ENCODE measurements at regions of chr11 and their contacts with region 1.

Region 1: DNA sequence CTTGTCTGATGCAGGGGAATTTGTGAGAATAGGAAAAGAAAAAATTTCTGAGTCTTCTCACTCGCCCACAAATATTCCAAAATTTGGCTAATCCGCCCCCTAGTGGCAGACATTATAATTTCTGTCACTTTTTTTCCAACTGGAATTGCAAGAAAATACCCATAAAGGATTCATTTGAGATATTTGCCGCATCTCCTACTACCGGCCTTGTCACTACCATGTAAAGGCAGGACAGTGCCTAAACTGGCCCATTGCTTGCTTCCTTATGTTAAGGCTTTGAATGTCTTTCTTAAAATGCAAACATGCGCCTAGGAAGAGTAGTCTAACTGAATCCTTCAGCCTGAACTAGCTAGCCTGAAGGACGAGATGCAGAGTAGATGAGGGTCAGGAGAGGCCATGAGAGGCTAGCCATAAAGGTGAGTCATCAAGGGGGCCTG is 9.3 kb upstream of the CEP295 start:
- DNase-seq: no peak
- ATAC-seq: no peak
- H3K4me3 ChIP-seq: no peak overlapping the region
- H3K27ac ChIP-seq: no peak overlapping the region
- H3K4me1 ChIP-seq: no peaks in the 10 kb centered on the region
- H3K27me3 ChIP-seq: no peaks in the 10 kb centered on the region
- CTCF ChIP-seq: peak; percentile 41 to 77 (median 68)
- POLR2A ChIP-seq: no peak

Region 2: DNA sequence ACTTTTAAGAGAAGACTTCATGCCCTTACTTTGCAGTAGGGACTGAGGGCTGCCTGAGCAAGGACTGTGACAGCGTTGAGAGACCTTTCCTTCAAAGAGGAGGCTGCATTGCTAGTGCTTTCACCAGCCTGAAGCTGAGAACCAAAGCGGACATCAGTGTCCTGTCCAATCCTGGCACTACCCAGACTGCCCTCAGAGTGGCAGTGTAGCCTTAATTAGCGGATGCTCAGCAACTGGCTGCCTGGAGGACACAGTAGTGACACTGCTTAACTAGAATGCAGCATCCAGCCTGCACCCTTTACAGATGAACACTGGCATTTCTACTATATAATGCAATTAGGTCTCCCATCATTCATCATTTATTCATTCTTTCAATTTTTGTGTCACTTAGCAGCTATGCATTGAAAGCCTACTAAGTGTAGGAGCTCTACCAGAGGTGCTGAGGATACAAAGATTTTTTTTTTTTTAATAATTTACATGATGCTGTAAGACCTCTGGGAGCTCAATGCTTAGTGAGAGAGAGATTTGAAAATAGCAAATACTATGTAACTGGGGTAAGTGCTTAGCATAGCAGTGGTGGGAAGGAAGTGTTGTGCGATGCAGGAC is 417.5 kb before region 1 on chr11:
- in situ Hi-C with region 1: loop called (anchors 5 to 10 kb)
- intact Hi-C with region 1: loop called (anchors 1 kb)
- DNase-seq: peak; percentile 42 to 59
- ATAC-seq: peak; percentile 94 to 99
- H3K4me3 ChIP-seq: no peak overlapping the region
- H3K27ac ChIP-seq: no peak overlapping the region
- H3K4me1 ChIP-seq: no peaks in the 10 kb centered on the region
- H3K27me3 ChIP-seq: no peaks in the 10 kb centered on the region
- CTCF ChIP-seq: peak; percentile 71 to 95 (median 86)
- POLR2A ChIP-seq: no peak

Region 3: GRCh38 chr11:93487032-93487483 is 165.1 kb before region 1 on chr11:
- in situ Hi-C with region 1: no loop called
- intact Hi-C with region 1: loop called (anchors 10 kb)
- DNase-seq: no peak
- ATAC-seq: no peak
- H3K4me3 ChIP-seq: no peak overlapping the region
- H3K27ac ChIP-seq: no peak overlapping the region
- H3K4me1 ChIP-seq: no peaks in the 10 kb centered on the region
- H3K27me3 ChIP-seq: no peaks in the 10 kb centered on the region
- CTCF ChIP-seq: no peak
- POLR2A ChIP-seq: no peak

Region 4: GRCh38 chr11:93767018-93767417 is 114.8 kb after region 1 on chr11:
- in situ Hi-C with region 1: no loop called
- intact Hi-C with region 1: no loop called
- DNase-seq: no peak
- ATAC-seq: no peak
- H3K4me3 ChIP-seq: no peak overlapping the region
- H3K27ac ChIP-seq: no peak overlapping the region
- H3K4me1 ChIP-seq: no peaks in the 10 kb centered on the region
- H3K27me3 ChIP-seq: no peaks in the 10 kb centered on the region
- CTCF ChIP-seq: no peak
- POLR2A ChIP-seq: no peak

Region 5: GRCh38 chr11:94100253-94100652 is 448.1 kb after region 1 on chr11:
- in situ Hi-C with region 1: no loop called
- intact Hi-C with region 1: no loop called
- DNase-seq: no peak
- ATAC-seq: no peak
- H3K4me3 ChIP-seq: no peak overlapping the region
- H3K27ac ChIP-seq: no peak overlapping the region
- H3K4me1 ChIP-seq: no peaks in the 10 kb centered on the region
- H3K27me3 ChIP-seq: no peaks in the 10 kb centered on the region
- CTCF ChIP-seq: no peak
- POLR2A ChIP-seq: no peak

Region 6: GRCh38 chr11:94433049-94433448 is 780.9 kb after region 1 on chr11:
- in situ Hi-C with region 1: no loop called
- intact Hi-C with region 1: no loop called
- DNase-seq: no peak
- ATAC-seq: no peak
- H3K4me3 ChIP-seq: no peak overlapping the region
- H3K27ac ChIP-seq: no peak overlapping the region
- H3K4me1 ChIP-seq: no peaks in the 10 kb centered on the region
- H3K27me3 ChIP-seq: no peaks in the 10 kb centered on the region
- CTCF ChIP-seq: no peak
- POLR2A ChIP-seq: no peak

Measured in gastrocnemius medialis (tissue), 4 donors.